HEK293T (cell line): ENCODE measurements at regions of chr12 and their contacts with region 1.

Region 1: GRCh38 chr12:3034067-3034750 is 43.0 kb upstream of the TSPAN9 start:
- DNase-seq: peak; percentile 77

Region 2: GRCh38 chr12:2853626-2854025 is 180.6 kb before region 1 on chr12:
- CTCF ChIA-PET with region 1: interaction called, 15 read pairs
- POLR2A ChIA-PET with region 1: no interaction called
- DNase-seq: peak; percentile 92

Region 3: DNA sequence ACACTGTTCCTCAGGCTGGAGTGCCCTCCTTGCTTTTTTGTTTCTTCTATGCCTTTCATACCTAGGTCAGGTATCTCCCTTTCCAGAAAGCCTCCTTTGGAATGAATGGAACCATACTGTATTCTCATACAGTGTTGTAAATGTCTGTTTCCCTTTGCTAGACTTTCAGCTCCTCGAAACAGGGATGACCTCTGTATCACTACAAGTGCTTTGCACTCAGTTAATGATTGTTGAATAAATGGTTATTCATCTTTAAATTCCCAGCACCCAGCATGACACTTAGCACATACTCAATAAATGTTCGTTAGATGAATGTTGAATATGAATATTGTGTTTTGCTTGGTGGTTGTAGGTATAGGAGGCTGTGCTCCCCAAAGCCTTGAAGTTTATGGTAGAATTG is 149.4 kb before region 1 on chr12:
- CTCF ChIA-PET with region 1: interaction called, 12 read pairs
- POLR2A ChIA-PET with region 1: no interaction called
- DNase-seq: no peak

Region 4: GRCh38 chr12:3020850-3021435 is 13.3 kb before region 1 on chr12:
- CTCF ChIA-PET with region 1: no interaction called
- POLR2A ChIA-PET with region 1: no interaction called
- DNase-seq: no peak